Colonic mucosa (tissue), 4 donors: ENCODE measurements at regions of chr4 and their contacts with region 1.

Region 1: DNA sequence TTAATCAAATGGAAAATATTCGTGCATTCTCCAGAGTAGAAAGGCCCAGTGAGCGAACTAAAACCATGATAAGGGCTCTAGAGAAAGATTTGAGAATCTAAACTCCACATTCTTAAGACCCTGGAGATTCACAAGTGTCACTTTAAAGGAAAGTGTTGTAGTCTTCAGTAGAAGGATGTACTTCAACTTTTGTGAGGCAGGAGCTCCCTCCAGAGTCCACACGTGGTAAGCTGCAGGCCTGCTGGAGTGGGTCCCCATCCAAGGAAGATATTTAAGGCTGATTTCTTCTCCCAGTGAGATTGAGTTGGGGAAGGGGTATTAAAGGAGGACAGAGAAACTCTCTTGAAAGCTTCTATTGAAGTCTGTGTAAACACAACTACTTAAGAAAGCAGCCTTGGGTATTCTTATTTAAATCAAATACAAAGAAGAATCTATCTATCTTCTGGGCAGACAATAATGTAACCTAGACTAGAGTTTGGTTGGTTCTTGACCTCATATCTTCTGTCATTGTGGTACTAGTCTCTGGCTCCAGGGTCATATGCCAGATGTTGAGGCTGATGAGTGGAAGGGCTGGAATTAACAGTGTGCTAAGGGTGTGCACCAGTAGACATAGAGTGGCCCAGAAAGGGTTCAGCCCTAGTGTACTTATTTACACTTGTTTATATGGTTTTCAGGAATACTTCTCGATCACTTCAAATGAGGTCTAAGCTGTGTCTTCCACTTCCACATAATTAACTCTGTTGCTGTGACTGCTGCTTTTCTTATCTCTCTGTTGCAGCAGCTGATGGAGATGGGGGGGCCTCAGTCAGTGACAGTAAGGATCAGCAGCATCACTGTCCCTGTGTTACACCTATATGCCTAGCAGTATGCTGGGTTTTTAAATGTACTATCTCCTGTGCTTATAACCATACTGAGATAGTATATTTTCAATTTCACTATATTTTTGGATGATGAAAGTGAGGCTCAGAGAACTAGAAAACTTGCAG is 76.1 kb downstream of the HMGB2 start:
- DNase-seq: peak; percentile 61
- H3K4me3 ChIP-seq: no peak overlapping the region
- H3K27ac ChIP-seq: no peak overlapping the region
- H3K4me1 ChIP-seq: no peaks in the 10 kb centered on the region
- H3K27me3 ChIP-seq: no peaks in the 10 kb centered on the region
- CTCF ChIP-seq: peak; percentile 61

Region 2: GRCh38 chr4:173013232-173013930 is 244.6 kb before region 1 on chr4:
- intact Hi-C with region 1: loop called (anchors 5 kb)
- DNase-seq: peak; percentile 60
- H3K4me3 ChIP-seq: no peak overlapping the region
- H3K27ac ChIP-seq: no peak overlapping the region
- H3K4me1 ChIP-seq: no peaks in the 10 kb centered on the region
- H3K27me3 ChIP-seq: no peaks in the 10 kb centered on the region
- CTCF ChIP-seq: peak; percentile 75

Region 3: GRCh38 chr4:173025131-173025530 is 232.9 kb before region 1 on chr4:
- intact Hi-C with region 1: loop called (anchors 2 kb)
- DNase-seq: peak; percentile 71
- H3K4me3 ChIP-seq: no peak overlapping the region
- H3K27ac ChIP-seq: no peak overlapping the region
- H3K4me1 ChIP-seq: no peaks in the 10 kb centered on the region
- H3K27me3 ChIP-seq: no peaks in the 10 kb centered on the region
- CTCF ChIP-seq: peak; percentile 65